Activated naive CD4-positive, alpha-beta T cell treated with anti-CD3 and anti-CD28 coated beads for 36 hours (primary cell): ENCODE measurements at regions of chr21 and their contacts with region 1.

Region 1: GRCh38 chr21:33360881-33361602 is 36.3 kb downstream of the IFNAR1 start:
- DNase-seq: peak; percentile 97
- H3K4me3 Mint-ChIP-seq: peak overlapping the region; percentile 86
- H3K27ac Mint-ChIP-seq: peak overlapping the region; percentile 95
- H3K4me1 Mint-ChIP-seq: peaks cover 17% of the 10 kb centered on the region
- H3K27me3 Mint-ChIP-seq: no peaks in the 10 kb centered on the region

Region 2: GRCh38 chr21:32612075-32612998 is 748.7 kb before region 1 on chr21 and contains the start of gene CFAP298:
- CTCF ChIA-PET with region 1: no interaction called
- intact Hi-C with region 1: no loop called
- DNase-seq: peak; percentile 88
- H3K4me3 Mint-ChIP-seq: peak within 1 kb of the TSS; percentile 98
- H3K27ac Mint-ChIP-seq: peak within 1 kb of the TSS; percentile 83
- H3K4me1 Mint-ChIP-seq: peaks cover 13% of the 10 kb centered on the region
- H3K27me3 Mint-ChIP-seq: no peaks in the 10 kb centered on the region
- total RNA-seq, gene CFAP298: 33.3 to 35.6 TPM

Region 3: DNA sequence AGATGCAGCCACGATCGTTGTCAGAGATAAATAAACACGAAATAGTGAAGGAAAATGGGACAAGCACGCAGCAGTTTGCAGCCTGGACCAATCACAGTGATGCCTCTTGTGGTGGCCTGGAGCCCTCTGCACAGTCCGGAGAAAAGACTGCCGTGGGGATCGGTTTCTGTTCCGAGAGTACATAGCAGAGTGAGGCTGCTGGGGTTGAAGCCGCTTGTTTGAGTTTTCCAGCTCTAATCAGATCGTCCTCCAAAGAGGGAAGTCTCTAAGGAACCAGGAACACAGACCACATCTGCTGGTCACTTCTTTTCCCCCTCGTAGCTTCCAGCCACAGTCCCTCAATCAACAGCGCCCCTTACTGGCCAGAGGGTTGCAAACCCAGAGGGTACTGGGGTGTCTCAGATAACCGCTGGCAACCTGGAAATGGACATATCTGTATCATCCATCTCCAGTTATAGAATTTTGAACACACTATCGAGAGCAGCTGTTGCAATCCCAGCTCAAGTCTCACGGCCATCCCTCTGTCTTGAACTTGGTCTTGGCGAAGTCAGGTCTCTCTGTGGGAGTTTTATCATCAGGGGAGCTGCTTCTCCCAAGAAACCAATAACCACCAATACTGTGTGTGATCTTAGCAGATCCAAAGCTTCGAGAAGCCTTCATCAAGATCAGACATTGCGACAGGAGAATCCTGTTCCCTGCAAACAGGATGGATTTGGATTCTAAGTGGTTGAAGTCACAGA is 233.7 kb before region 1 on chr21:
- CTCF ChIA-PET with region 1: interaction called, 3 read pairs
- intact Hi-C with region 1: loop called (anchors 1 kb)
- DNase-seq: peak; percentile 84
- H3K4me3 Mint-ChIP-seq: peak overlapping the region; percentile 55
- H3K27ac Mint-ChIP-seq: no peak overlapping the region
- H3K4me1 Mint-ChIP-seq: peaks cover 4% of the 10 kb centered on the region
- H3K27me3 Mint-ChIP-seq: no peaks in the 10 kb centered on the region

Region 4: GRCh38 chr21:33324291-33325221 is 36.5 kb before region 1 on chr21 and contains the start of gene IFNAR1:
- CTCF ChIA-PET with region 1: interaction called, 14 read pairs
- intact Hi-C with region 1: loop called (anchors 2 kb)
- DNase-seq: peak; percentile 99
- H3K4me3 Mint-ChIP-seq: no peak within 1 kb of the TSS
- H3K27ac Mint-ChIP-seq: no peak within 1 kb of the TSS
- H3K4me1 Mint-ChIP-seq: peaks cover 28% of the 10 kb centered on the region
- H3K27me3 Mint-ChIP-seq: no peaks in the 10 kb centered on the region
- total RNA-seq, gene IFNAR1: 20.6 to 24.3 TPM

Region 5: GRCh38 chr21:33374450-33375096 is 13.5 kb after region 1 on chr21:
- CTCF ChIA-PET with region 1: interaction called, 28 read pairs
- intact Hi-C with region 1: loop called (anchors 1 kb)
- DNase-seq: peak; percentile 81
- H3K4me3 Mint-ChIP-seq: no peak overlapping the region
- H3K27ac Mint-ChIP-seq: no peak overlapping the region
- H3K4me1 Mint-ChIP-seq: peaks cover 13% of the 10 kb centered on the region
- H3K27me3 Mint-ChIP-seq: no peaks in the 10 kb centered on the region

Region 6: DNA sequence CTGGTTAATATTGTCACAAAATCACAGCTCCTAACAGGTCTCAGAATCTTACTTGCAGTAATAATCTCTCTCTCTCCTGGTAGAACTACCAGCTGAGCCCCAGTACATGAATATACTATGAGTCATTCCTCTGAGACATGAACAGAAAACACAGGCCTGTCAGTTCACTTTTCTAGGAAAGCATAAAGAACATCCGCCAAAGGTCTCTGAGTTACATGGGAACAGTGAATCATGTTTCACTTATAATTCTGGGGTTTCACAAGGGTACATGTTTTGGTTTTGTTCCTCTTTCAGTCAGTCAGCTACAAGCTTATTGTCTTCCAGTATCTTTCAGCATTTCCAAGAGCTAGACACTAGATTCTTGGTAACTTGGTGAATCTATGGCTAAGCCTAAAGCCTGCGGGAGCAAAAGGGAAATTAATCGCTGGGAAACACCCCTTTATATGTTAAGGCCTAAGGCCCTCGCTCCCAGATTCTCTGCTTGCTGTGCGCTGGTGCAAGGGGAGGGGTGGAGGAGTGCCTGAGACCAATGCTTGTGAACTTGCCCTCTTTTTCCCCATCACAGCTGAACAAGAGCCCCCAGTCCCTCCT is 73.8 kb after region 1 on chr21:
- CTCF ChIA-PET with region 1: interaction called, 11 read pairs
- intact Hi-C with region 1: loop called (anchors 1 kb)
- DNase-seq: peak; percentile 43
- H3K4me3 Mint-ChIP-seq: peak overlapping the region; percentile 25
- H3K27ac Mint-ChIP-seq: peak overlapping the region; percentile 76
- H3K4me1 Mint-ChIP-seq: peaks cover 29% of the 10 kb centered on the region
- H3K27me3 Mint-ChIP-seq: no peaks in the 10 kb centered on the region

Region 7: DNA sequence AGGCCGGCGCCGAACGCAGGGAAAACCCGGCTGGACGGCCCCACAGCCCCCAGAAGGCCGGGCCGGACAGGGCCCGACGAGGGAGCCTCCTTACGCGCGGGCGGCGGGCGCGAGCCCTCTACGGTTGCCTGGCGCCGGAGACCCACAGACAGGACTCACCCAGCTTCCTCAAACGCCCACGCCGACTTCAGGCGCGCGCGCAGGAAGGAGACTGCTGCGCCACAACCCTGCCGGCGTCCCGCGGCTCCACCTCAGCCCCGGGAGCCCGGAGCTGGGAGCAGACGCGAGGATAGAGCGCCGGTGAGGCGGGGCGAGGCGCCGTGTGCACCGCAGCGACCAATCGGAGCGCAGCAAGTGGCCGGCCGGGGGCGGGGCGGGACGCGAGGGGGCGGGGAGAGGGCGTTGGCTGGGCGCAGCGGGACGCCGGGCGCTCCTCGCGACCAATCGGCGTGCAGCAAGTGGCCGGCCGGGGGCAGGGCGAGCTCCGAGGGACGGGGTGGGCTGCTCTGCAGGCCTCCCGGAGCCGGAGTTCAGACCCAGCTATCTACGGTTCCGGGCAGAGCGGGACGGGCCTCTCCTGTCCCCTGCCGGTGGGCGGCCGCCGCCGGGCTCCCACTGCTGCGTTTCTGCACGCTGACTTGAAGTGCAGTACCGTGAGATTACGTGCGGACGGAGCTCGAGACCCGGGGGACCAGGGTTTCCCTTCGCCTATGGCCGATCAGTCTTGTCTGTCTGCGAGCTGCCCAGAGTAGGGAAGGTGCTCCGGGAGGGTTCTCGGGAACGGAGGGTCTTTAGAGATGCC is 118.8 kb after region 1 on chr21 and contains the start of gene TMEM50B:
- CTCF ChIA-PET with region 1: interaction called, 11 read pairs
- intact Hi-C with region 1: no loop called
- DNase-seq: peak; percentile 96
- H3K4me3 Mint-ChIP-seq: peak within 1 kb of the TSS; percentile 89
- H3K27ac Mint-ChIP-seq: peak within 1 kb of the TSS; percentile 68
- H3K4me1 Mint-ChIP-seq: peaks cover 15% of the 10 kb centered on the region
- H3K27me3 Mint-ChIP-seq: no peaks in the 10 kb centered on the region
- total RNA-seq, gene TMEM50B: 17.8 to 18.2 TPM

Region 8: GRCh38 chr21:33668180-33668579 is 307.1 kb after region 1 on chr21:
- CTCF ChIA-PET with region 1: no interaction called
- intact Hi-C with region 1: no loop called
- DNase-seq: no peak
- H3K4me3 Mint-ChIP-seq: no peak overlapping the region
- H3K27ac Mint-ChIP-seq: no peak overlapping the region
- H3K4me1 Mint-ChIP-seq: no peaks in the 10 kb centered on the region
- H3K27me3 Mint-ChIP-seq: no peaks in the 10 kb centered on the region

Region 9: GRCh38 chr21:33968080-33968994 is 607.3 kb after region 1 on chr21:
- CTCF ChIA-PET with region 1: no interaction called
- intact Hi-C with region 1: no loop called
- DNase-seq: peak; percentile 31
- H3K4me3 Mint-ChIP-seq: no peak overlapping the region
- H3K27ac Mint-ChIP-seq: no peak overlapping the region
- H3K4me1 Mint-ChIP-seq: peaks cover 3% of the 10 kb centered on the region
- H3K27me3 Mint-ChIP-seq: no peaks in the 10 kb centered on the region